ENCODE measurements at regions of chr15 and their contacts with region 1.

Region 1: DNA sequence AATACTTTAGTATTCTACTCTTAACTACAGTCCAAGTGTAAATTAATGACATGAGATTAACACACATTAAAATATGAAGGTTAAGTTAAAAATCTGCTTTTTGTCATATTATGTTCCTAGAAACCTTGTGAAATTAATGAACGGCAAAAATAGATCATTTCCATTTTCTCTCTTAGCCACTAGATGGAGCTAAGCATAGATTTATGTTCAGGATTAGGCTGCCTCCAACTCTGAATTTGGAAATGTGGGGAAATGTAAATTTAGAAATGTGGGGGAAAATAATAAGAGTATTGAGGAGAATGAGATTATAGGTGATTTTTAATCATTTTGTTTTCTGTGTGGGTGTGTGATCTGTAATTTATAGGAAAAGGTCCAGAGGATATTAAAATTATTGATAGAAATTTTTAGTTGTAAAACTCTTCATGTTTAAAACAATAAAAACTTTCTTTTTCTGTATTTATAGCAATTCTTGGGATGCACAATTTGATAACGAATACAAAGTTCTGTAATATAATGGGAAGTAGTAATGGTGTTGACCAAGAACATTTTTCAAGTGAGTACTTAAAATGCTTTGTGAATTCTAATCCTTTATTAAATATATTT is 59.2 kb downstream of the TMOD3 start:
- DNase-seq: no peak

Region 2: GRCh38 chr15:51829360-51830275 is 59.1 kb before region 1 on chr15 and contains the start of gene TMOD3:
- intact Hi-C with region 1: loop called (anchors 10 kb)
- DNase-seq: peak; percentile 97
- total RNA-seq, gene TMOD3: 17.4 TPM

Region 3: GRCh38 chr15:51846463-51847230 is 42.0 kb before region 1 on chr15:
- intact Hi-C with region 1: no loop called
- DNase-seq: no peak

Region 4: GRCh38 chr15:52039925-52040781 is 151.5 kb after region 1 on chr15:
- intact Hi-C with region 1: no loop called
- DNase-seq: no peak

Region 5: DNA sequence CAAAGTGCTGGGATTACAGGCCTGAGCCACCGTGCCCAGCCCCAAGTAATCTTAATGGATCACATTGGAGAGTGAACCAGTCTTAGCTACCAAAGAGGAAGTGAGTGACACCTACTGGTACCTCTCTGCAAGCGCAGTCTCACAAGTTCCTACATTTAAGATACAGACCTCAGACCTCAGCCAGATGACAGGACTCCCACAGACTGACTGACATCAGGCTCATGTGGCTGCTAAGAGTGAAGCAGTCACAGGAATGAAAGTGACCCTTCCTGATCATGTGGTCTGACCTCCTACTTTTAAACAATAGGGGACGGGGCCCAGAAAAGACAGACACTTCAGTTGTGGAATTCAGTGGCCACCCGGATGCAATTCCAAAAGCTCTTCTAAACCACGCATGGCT is 338.8 kb after region 1 on chr15:
- intact Hi-C with region 1: loop called (anchors 10 kb)
- DNase-seq: no peak